ENCODE measurements at regions of chr1 and their contacts with region 1.

Region 1: GRCh38 chr1:36385410-36386257 is at the start of gene STK40:
- DNase-seq: peak; percentile 99
- total RNA-seq, gene STK40: 75.5 TPM

Region 2: DNA sequence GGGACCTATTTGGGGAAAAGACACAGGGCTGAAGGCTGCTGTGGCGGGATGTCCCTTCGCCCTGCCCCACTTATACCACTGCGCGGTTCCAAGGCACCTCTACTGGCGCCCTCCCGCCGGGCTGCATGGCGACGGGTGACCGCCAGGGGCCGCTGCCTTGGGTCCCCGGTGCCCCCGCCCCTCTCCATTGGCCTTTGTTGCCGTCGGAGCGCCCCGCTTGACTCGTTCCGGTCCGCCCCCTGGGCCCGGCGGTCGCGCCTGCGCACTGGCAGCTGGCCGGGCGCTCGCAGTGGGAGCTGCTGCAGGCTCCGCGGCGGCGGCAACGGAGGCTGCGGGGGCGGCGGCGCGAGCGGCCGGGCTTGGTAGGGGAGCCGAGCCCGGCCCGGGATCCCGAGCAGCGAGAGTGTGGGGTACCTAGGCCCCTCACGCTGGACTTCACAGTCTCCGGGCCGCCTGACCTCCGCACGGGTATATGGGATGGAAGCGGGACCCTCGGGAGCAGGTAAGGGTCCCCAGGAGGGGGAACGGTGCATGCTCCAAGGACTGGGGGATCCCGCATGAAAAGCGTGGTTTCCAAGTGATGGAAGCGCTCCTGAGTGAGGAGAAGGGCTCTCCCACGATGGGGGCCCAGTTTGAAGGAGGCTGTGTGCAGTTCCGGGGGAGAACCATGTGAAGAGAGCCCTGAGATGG is 502.5 kb before region 1 on chr1 and contains the start of gene AGO1:
- intact Hi-C with region 1: no loop called
- DNase-seq: peak; percentile 98
- total RNA-seq, gene AGO1: 21.1 TPM

Region 3: GRCh38 chr1:36155408-36156328 is 230.0 kb before region 1 on chr1 and contains the start of gene MAP7D1:
- intact Hi-C with region 1: loop called (anchors 2 kb)
- DNase-seq: peak; percentile 96
- total RNA-seq, gene MAP7D1: 262 TPM

Region 4: GRCh38 chr1:36323597-36324352 is 61.9 kb before region 1 on chr1 and contains the start of gene EVA1B:
- intact Hi-C with region 1: loop called (anchors 5 kb)
- DNase-seq: peak; percentile 90
- total RNA-seq, gene EVA1B: 11.3 TPM

Region 5: DNA sequence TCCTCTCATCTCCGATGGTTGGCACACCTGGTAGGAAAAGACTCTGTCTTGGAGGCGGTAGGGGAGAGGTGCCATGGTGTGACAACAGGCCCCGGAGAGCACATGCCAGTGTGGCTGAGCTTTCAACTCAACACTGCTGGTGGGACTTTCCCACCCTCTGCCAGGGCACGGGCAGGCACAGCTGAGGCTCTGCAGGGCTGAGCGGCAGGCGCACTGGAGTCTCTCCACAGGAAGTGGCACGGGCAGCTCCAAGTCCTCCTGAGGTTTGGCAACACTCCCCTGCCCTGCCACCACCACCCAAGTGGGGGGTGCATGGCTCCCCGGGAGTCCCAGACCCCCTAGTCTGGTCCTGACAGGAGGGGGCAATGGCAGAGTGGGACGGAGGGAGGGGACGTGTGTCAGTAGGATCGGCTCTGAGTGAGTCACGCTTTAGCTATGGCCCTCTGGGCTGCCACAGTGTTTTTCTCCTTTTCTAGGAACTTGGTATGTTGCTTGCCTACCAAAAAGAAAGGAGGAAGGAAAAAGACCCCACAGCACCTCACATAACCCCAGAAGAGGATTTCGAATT is 34.9 kb before region 1 on chr1:
- intact Hi-C with region 1: no loop called
- DNase-seq: no peak

Region 6: GRCh38 chr1:36369061-36369861 is 16.4 kb before region 1 on chr1:
- intact Hi-C with region 1: no loop called
- DNase-seq: no peak

Region 7: DNA sequence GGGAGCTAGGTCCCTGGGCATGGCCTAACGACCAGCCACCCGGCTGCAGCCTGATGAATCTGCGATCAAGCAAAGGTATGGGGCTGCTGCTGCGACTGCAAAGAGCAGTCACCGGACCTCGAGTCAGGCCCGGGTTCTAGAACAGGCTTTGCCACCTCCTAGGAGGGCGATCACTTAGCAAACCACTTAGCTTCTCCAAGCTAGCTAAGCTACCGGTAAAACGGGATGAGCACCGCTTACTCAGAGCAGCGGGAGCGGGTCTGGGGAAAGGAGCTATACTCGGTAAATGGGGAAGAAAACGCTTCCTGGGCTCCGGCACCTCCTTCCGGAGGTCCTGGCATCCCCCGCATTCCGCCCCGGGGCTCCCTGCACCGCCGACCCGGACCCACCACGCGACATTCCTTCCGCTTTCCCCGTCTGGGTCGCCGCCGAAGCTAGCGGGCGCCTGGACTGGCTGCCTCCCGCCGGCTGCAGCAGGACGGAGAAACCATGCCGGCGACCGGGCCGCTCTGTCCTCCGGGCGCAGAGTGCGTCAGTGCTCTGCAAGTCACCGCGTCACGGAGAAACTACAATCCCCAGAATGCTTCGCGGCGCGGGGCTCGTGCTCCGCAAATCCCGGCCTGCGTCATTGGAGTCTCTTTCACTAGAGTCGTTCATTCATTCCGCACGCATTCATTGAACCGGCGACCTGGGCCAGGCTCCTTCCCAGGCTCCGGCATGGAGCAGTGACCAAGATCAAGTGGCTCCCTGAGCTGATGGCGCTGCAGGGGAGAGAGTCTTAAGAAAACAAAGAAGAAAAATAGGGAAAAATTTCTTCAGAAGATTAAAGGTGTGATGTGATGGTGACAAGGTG is 12.0 kb after region 1 on chr1 and contains the start of gene LSM10:
- intact Hi-C with region 1: loop called (anchors 2 kb)
- DNase-seq: peak; percentile 97
- total RNA-seq, gene LSM10: 52.7 TPM

Region 8: DNA sequence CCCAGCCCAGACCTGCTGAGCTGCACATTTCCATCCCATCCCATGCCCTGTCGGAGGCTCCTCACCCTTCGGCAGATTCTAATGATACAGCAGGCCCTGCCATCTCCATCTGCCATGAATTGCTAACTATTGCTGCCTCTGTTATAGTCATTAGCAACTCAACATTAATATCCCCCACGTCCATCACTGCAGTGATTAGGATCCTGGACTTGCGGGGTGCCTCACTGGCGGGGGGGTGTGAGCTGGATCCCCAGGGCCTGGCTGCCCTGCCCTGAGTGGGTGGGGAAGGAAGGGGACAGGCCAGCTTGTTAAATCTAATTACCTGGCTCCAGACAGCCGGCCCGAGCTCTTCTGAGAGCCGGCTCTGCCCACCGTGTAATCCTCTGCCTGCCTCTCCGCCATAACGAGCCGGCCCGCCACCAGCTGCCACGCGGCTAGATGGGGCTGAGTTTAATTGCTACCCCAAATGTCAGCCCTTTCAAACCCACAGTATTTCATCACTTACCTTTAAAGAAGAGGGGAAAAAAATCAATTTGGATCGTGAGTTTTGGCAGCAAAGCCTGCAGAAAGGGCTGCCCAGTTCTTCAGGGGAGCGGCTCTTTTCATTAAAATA is 324.3 kb after region 1 on chr1:
- intact Hi-C with region 1: no loop called
- DNase-seq: no peak

Measured in cardiac septum (tissue), 1 donor.